ENCODE measurements at regions of chr5 and their contacts with region 1.

Region 1: DNA sequence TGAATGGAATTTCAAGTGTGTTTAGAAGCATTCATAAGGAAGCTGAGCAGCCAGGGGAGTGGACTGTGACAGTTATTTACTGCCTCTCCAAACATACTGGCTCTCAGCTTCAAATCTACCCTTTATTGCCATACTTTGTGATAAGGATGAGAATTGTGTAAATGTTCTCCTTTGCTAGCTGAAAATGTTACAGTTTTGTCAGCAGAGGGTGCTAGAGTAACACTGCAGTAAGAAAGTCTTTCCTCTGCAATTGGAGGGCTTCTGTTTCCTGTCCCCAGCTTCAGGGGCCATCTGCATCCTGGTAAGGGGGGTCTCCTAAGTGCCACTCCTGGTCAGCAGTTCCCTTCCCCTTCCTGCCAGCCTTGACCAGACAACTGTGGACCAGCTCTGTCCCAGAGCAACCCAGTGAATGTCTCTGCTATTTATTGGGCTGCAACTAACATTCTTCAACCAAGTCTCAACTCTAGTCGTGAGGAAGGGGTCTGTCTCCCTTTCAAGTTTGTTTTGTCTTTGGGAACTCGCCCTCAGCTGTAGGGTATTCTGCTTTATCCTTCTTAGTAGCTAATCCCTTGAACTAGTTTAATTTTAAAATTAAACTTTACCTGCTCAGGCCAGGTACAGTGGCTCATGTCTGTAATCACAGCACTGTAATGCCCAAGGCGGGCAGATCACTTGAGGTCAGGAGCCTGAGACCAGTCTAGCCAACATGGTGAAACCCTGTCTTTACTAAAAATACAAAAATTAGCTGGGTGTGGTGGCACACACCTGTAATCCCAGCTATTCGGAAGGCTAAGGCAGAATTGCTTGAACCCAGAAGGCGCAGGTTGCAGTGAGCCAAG is 45.3 kb downstream of the RAPGEF6 start:
- DNase-seq: peak; percentile 14
- ATAC-seq: peak; percentile 66
- H3K4me3 Mint-ChIP-seq: no peak overlapping the region
- H3K27ac Mint-ChIP-seq: no peak overlapping the region
- H3K4me1 Mint-ChIP-seq: peaks cover 46% of the 10 kb centered on the region
- H3K27me3 Mint-ChIP-seq: no peaks in the 10 kb centered on the region
- CTCF ChIP-seq: peak; percentile 86

Region 2: GRCh38 chr5:131338051-131338453 is 251.7 kb before region 1 on chr5:
- CTCF ChIA-PET with region 1: no interaction called
- POLR2A ChIA-PET with region 1: no interaction called
- intact Hi-C with region 1: no loop called
- DNase-seq: no peak
- ATAC-seq: no peak
- H3K4me3 Mint-ChIP-seq: no peak overlapping the region
- H3K27ac Mint-ChIP-seq: peak overlapping the region; percentile 76
- H3K4me1 Mint-ChIP-seq: peaks cover 80% of the 10 kb centered on the region
- H3K27me3 Mint-ChIP-seq: no peaks in the 10 kb centered on the region
- CTCF ChIP-seq: no peak

Region 3: DNA sequence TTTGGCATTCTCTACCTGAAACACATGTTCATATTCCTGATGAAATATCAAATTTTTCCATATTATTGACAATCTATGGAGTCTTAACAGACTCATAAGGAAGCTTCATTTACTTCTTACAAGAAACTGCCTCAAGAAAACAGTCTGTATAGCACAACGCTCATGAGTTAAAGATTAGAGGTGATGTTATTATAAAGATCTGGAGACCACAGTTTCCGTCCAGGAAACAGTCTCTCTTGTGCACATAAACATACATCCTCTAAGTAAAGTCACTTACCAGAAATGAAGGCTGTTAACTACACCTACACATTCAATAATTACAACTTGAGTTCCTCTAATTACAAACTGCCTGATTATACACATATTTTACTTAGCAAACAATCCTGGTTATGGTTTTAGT is 41.6 kb before region 1 on chr5:
- CTCF ChIA-PET with region 1: no interaction called
- POLR2A ChIA-PET with region 1: no interaction called
- intact Hi-C with region 1: no loop called
- DNase-seq: peak; percentile 37
- ATAC-seq: peak; percentile 91
- H3K4me3 Mint-ChIP-seq: peak overlapping the region; percentile 76
- H3K27ac Mint-ChIP-seq: peak overlapping the region; percentile 92
- H3K4me1 Mint-ChIP-seq: peaks cover 71% of the 10 kb centered on the region
- H3K27me3 Mint-ChIP-seq: no peaks in the 10 kb centered on the region
- CTCF ChIP-seq: no peak

Region 4: GRCh38 chr5:131605086-131605485 is 15.4 kb after region 1 on chr5:
- CTCF ChIA-PET with region 1: interaction called, 14 read pairs
- POLR2A ChIA-PET with region 1: no interaction called
- intact Hi-C with region 1: no loop called
- DNase-seq: no peak
- ATAC-seq: no peak
- H3K4me3 Mint-ChIP-seq: no peak overlapping the region
- H3K27ac Mint-ChIP-seq: no peak overlapping the region
- H3K4me1 Mint-ChIP-seq: peaks cover 41% of the 10 kb centered on the region
- H3K27me3 Mint-ChIP-seq: no peaks in the 10 kb centered on the region
- CTCF ChIP-seq: no peak

Region 5: DNA sequence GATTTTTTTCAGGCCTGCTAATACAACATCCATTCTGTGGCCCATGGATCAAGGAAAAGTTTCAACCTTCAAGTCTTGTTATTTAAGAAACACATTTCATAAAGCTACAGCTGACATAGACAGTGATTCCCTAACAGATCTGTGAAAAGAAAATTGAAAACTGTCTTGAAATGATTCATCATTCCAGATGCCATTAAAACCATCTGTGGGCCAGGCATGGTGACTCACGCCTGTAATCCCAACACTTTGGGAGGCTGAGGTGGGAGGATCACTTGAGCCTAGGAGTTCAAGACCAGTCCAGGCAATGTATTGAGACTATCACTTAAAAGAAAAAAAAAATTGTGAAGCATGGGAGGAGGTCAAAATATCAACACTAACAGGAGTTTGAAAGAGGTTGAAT is 39.3 kb after region 1 on chr5:
- CTCF ChIA-PET with region 1: interaction called, 15 read pairs
- POLR2A ChIA-PET with region 1: interaction called, 3 read pairs
- intact Hi-C with region 1: no loop called
- DNase-seq: no peak
- ATAC-seq: no peak
- H3K4me3 Mint-ChIP-seq: no peak overlapping the region
- H3K27ac Mint-ChIP-seq: peak overlapping the region; percentile 13
- H3K4me1 Mint-ChIP-seq: peaks cover 46% of the 10 kb centered on the region
- H3K27me3 Mint-ChIP-seq: no peaks in the 10 kb centered on the region
- CTCF ChIP-seq: no peak

Region 6: DNA sequence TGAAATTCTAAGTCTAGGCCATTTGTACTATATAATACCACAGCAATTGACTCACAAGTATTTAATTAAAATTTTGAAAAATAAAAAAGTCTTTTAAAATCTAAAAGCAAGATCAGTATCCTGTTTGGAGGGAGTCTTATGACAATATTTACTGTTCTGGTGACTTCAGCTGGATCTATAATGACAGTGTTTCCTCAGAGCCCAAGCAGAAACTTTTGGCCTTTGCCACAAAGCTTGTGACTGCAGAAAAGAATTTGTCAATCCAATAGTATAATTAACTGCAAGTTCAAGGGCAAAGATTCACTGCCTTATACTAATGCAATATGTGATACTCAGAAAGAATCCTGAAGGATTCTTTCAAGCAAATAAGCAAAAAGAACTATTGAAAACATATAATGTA is 94.9 kb after region 1 on chr5:
- CTCF ChIA-PET with region 1: interaction called, 10 read pairs
- POLR2A ChIA-PET with region 1: no interaction called
- intact Hi-C with region 1: no loop called
- DNase-seq: no peak
- ATAC-seq: no peak
- H3K4me3 Mint-ChIP-seq: no peak overlapping the region
- H3K27ac Mint-ChIP-seq: no peak overlapping the region
- H3K4me1 Mint-ChIP-seq: no peaks in the 10 kb centered on the region
- H3K27me3 Mint-ChIP-seq: no peaks in the 10 kb centered on the region
- CTCF ChIP-seq: no peak

Region 7: GRCh38 chr5:131999441-132000240 is 409.9 kb after region 1 on chr5:
- CTCF ChIA-PET with region 1: interaction called, 143 read pairs
- POLR2A ChIA-PET with region 1: no interaction called
- intact Hi-C with region 1: no loop called
- DNase-seq: no peak
- ATAC-seq: peak; percentile 29
- H3K4me3 Mint-ChIP-seq: no peak overlapping the region
- H3K27ac Mint-ChIP-seq: no peak overlapping the region
- H3K4me1 Mint-ChIP-seq: peaks cover 42% of the 10 kb centered on the region
- H3K27me3 Mint-ChIP-seq: no peaks in the 10 kb centered on the region
- CTCF ChIP-seq: no peak

Region 8: GRCh38 chr5:132026516-132027008 is 436.8 kb after region 1 on chr5:
- CTCF ChIA-PET with region 1: no interaction called
- POLR2A ChIA-PET with region 1: no interaction called
- intact Hi-C with region 1: no loop called
- DNase-seq: peak; percentile 82
- ATAC-seq: peak; percentile 91
- H3K4me3 Mint-ChIP-seq: no peak overlapping the region
- H3K27ac Mint-ChIP-seq: peak overlapping the region; percentile 56
- H3K4me1 Mint-ChIP-seq: peaks cover 4% of the 10 kb centered on the region
- H3K27me3 Mint-ChIP-seq: no peaks in the 10 kb centered on the region
- CTCF ChIP-seq: no peak

Region 9: DNA sequence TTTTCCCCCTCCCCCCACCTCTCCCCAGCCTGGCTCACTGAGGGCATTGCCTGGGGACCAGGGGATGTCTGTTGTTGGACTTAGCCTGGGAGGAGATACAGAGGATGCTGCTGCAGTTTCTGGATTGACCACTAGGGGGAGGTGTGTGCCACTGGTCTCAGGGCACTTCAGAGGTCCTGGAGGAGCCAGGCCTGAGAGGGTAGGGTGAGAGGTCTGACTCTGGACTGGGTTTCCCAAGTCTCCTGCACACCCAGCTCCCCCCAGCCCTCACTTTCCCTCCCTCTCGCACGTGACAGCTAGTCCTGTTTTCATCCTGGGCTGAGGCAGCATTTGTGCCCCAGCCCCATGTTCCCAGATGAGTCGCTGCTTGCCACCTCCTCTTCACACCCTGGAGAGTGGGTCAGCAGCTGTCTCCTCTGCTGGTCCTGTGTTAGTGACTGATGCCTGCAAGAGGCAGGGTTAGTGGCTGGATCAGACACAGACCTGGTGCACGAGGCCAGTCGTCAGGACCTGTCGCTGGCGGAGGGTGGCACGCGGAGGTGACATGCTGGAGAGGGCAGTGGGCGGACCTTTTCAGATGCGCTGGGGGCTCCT is 475.1 kb after region 1 on chr5:
- CTCF ChIA-PET with region 1: interaction called, 15 read pairs
- POLR2A ChIA-PET with region 1: no interaction called
- intact Hi-C with region 1: no loop called
- DNase-seq: peak; percentile 93
- ATAC-seq: peak; percentile 78
- H3K4me3 Mint-ChIP-seq: no peak overlapping the region
- H3K27ac Mint-ChIP-seq: peak overlapping the region; percentile 6
- H3K4me1 Mint-ChIP-seq: peaks cover 34% of the 10 kb centered on the region
- H3K27me3 Mint-ChIP-seq: no peaks in the 10 kb centered on the region
- CTCF ChIP-seq: peak; percentile 92

Measured in activated CD8-positive, alpha-beta T cell treated with anti-CD3 and anti-CD28 coated beads for 36 hours (primary cell).